IMR-90 (cell line): ENCODE measurements at regions of chr4 and their contacts with region 1.

Region 1: DNA sequence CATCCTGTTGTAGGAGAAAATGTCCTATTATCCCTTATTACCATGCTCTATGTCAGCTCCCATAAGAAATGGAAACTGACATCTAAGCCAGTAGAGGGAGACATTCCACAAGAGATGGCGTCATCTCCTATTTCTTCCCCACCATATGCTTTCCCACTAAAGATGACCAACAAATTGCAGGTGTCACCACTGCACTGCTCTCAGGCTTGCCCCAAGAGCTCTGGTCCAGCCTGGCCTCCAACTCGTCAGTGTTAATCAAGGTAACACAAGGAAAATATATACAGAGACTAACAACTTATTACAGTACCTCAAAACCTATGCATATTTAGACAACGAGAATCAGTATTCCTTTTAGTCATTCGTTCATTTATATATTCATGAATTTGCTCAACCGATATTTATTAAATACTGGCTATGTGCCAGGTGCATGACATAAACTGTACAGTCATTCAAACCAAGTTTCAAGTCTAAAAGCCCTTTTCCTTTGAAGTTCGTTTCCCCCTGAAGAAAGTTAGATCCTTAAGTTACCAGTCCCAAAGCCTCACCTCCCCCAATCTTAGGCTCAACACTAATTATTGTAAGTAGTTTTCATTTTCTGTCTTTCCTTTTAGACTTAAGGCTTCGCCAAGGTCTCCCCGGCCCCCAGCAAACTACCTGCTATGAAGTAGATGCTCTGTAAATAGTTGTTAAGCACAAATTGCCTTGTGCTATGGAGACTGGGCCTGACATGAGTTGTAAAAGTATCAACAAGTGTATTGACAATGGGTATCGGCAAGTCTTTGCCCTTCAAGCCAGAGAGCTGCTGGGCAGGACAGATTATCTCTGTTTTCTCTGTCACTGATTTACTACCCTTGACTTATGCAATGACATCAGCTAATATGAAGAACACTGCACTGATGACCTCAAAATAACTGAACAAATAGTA is 3.1 kb upstream of the FGB start:
- DNase-seq: peak; percentile 65
- ATAC-seq: peak; percentile 84
- H3K4me3 ChIP-seq: no peak overlapping the region
- H3K27ac ChIP-seq: no peak overlapping the region
- H3K4me1 ChIP-seq: no peaks in the 10 kb centered on the region
- H3K27me3 ChIP-seq: no peaks in the 10 kb centered on the region; the same call in 1 of the 2 replicates
- CTCF ChIP-seq: peak; percentile 70
- POLR2A ChIP-seq: no peak
- RAD21 ChIP-seq: peak; percentile 77

Region 2: GRCh38 chr4:154618708-154619315 is 59.1 kb after region 1 on chr4:
- CTCF ChIA-PET with region 1: interaction called, 21 read pairs
- POLR2A ChIA-PET with region 1: no interaction called
- dilution Hi-C with region 1: no loop called
- in situ Hi-C with region 1: loop called (anchors 5 kb)
- intact Hi-C with region 1: loop called (anchors 1 kb)
- DNase-seq: peak; percentile 30
- ATAC-seq: peak; percentile 79
- H3K4me3 ChIP-seq: no peak overlapping the region
- H3K27ac ChIP-seq: no peak overlapping the region
- H3K4me1 ChIP-seq: no peaks in the 10 kb centered on the region
- H3K27me3 ChIP-seq: no peaks in the 10 kb centered on the region
- CTCF ChIP-seq: peak; percentile 68
- POLR2A ChIP-seq: no peak
- RAD21 ChIP-seq: peak; percentile 56

Region 3: GRCh38 chr4:154779362-154779947 is 219.7 kb after region 1 on chr4:
- CTCF ChIA-PET with region 1: no interaction called
- POLR2A ChIA-PET with region 1: no interaction called
- dilution Hi-C with region 1: no loop called
- in situ Hi-C with region 1: loop called (anchors 10 kb)
- intact Hi-C with region 1: loop called (anchors 1 kb)
- DNase-seq: peak; percentile 39
- ATAC-seq: peak; percentile 61
- H3K4me3 ChIP-seq: no peak overlapping the region
- H3K27ac ChIP-seq: no peak overlapping the region
- H3K4me1 ChIP-seq: no peaks in the 10 kb centered on the region
- H3K27me3 ChIP-seq: no peaks in the 10 kb centered on the region
- CTCF ChIP-seq: peak; percentile 56
- POLR2A ChIP-seq: no peak
- RAD21 ChIP-seq: peak; percentile 44; the same call in 1 of the 2 replicates